ENCODE measurements at regions of chr5 and their contacts with region 1.

Region 1: GRCh38 chr5:38441453-38442246 is 114.8 kb downstream of the LIFR start:
- DNase-seq: peak; percentile 90
- ATAC-seq: peak; percentile 99
- H3K4me3 Mint-ChIP-seq: no peak overlapping the region
- H3K27ac Mint-ChIP-seq: no peak overlapping the region
- H3K4me1 Mint-ChIP-seq: no peaks in the 10 kb centered on the region
- H3K27me3 Mint-ChIP-seq: peaks cover 25% of the 10 kb centered on the region

Region 2: DNA sequence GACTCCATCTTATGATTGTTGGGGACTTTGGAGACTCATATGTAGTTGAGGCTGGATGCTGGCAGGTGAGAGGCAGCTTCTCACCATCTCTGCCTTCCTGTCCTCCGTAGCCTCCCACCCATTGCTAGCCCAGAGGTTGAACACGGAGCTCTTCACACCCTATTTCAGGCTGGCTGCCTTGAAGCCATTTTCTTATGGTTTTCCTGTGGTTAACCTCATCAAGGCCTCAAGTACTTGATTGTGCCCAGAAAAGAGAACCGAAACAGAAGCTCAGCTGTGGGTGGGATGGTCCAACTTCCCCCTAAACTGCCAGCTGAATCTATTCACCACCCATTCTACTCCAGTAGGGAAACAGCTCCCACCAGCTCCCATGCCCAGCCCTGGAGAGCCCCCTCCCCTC is 11.9 kb after region 1 on chr5:
- CTCF ChIA-PET with region 1: interaction called, 45 read pairs
- POLR2A ChIA-PET with region 1: no interaction called
- intact Hi-C with region 1: no loop called
- DNase-seq: peak; percentile 50
- ATAC-seq: peak; percentile 94
- H3K4me3 Mint-ChIP-seq: no peak overlapping the region
- H3K27ac Mint-ChIP-seq: no peak overlapping the region
- H3K4me1 Mint-ChIP-seq: peaks cover 25% of the 10 kb centered on the region
- H3K27me3 Mint-ChIP-seq: peaks cover 78% of the 10 kb centered on the region

Region 3: GRCh38 chr5:38556599-38557305 is 115.1 kb after region 1 on chr5 and contains the start of gene LIFR:
- CTCF ChIA-PET with region 1: interaction called, 7 read pairs
- POLR2A ChIA-PET with region 1: interaction called, 3 read pairs
- intact Hi-C with region 1: loop called (anchors 1 kb)
- DNase-seq: peak; percentile 77
- ATAC-seq: peak; percentile 70
- H3K4me3 Mint-ChIP-seq: peak within 1 kb of the TSS; percentile 72
- H3K27ac Mint-ChIP-seq: no peak within 1 kb of the TSS
- H3K4me1 Mint-ChIP-seq: peaks cover 10% of the 10 kb centered on the region
- H3K27me3 Mint-ChIP-seq: peaks cover 52% of the 10 kb centered on the region
- total RNA-seq, gene LIFR: 0.09 to 0.14 TPM

Region 4: GRCh38 chr5:38591523-38591849 is 149.8 kb after region 1 on chr5:
- CTCF ChIA-PET with region 1: no interaction called
- POLR2A ChIA-PET with region 1: no interaction called
- intact Hi-C with region 1: no loop called
- DNase-seq: no peak
- ATAC-seq: no peak
- H3K4me3 Mint-ChIP-seq: no peak overlapping the region
- H3K27ac Mint-ChIP-seq: no peak overlapping the region
- H3K4me1 Mint-ChIP-seq: no peaks in the 10 kb centered on the region
- H3K27me3 Mint-ChIP-seq: peaks cover 10% of the 10 kb centered on the region

Region 5: DNA sequence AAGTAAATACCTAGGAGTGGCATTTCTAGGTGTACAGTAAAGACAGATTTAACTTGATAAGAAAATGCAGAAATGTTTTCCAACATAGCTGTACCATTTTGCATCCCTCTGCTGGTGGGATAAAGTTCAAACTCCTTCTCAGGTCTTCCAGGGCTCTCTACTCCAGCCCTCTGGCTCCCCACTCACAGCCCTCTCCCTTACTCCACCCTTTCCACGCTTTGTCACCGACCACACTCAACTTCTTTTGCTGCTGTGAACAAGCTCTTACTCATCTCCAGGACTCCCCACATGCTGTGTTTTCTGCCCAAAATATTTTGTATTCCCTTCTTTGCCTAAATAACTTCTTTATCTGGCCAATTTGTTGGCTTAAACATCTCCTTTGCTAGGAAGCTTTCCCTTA is 313.5 kb after region 1 on chr5:
- CTCF ChIA-PET with region 1: interaction called, 10 read pairs
- POLR2A ChIA-PET with region 1: no interaction called
- intact Hi-C with region 1: no loop called
- DNase-seq: no peak
- ATAC-seq: no peak
- H3K4me3 Mint-ChIP-seq: no peak overlapping the region
- H3K27ac Mint-ChIP-seq: no peak overlapping the region
- H3K4me1 Mint-ChIP-seq: no peaks in the 10 kb centered on the region
- H3K27me3 Mint-ChIP-seq: peaks cover 14% of the 10 kb centered on the region

Region 6: DNA sequence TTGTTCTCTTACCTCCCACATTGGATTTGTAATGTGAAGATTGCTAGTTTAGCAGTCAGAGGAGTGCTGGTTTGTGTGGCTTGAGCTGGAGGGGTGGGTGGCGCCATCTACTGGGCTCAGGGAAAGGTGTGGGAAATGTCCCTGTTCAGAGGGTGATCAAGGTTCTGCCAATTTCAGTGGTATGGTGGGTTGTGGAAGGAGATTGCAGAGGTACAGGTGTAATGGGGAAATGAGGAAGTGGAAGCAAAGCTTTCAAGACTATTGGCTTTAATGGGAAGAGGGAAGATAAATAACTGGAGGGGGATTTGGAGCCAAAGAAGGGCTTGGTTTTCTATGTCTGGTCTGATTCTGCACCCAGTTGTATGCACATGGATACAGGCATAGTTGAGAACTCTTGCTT is 480.5 kb after region 1 on chr5:
- CTCF ChIA-PET with region 1: interaction called, 27 read pairs
- POLR2A ChIA-PET with region 1: no interaction called
- intact Hi-C with region 1: loop called (anchors 1 to 5 kb)
- DNase-seq: peak; percentile 75
- ATAC-seq: peak; percentile 72
- H3K4me3 Mint-ChIP-seq: no peak overlapping the region
- H3K27ac Mint-ChIP-seq: no peak overlapping the region
- H3K4me1 Mint-ChIP-seq: no peaks in the 10 kb centered on the region
- H3K27me3 Mint-ChIP-seq: peaks cover 14% of the 10 kb centered on the region

Region 7: DNA sequence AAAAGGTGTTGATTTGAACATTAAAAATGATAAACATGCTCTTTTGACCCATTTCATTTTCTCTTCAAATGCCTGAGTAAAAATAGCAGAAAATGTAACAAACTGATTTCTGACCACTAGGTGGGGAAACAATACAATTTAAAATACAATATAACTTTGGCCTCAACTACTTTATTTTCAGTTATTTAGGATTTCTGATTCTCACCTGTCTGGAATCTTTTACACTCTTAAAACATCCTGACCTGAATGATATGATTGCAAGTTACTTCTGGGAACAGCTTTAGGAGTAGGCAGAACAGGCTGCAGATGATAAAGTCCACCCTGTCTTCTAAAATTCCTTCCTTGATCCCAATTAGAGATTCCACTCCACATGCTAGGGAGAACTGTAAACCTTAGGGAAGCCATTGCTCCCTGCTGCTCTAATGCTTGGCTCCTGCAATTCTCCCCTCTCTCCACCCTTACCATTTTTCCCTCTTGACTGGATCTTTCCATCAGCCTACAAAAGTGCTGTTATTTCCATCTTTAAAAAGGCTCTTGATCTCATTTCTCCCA is 707.4 kb after region 1 on chr5:
- CTCF ChIA-PET with region 1: no interaction called
- POLR2A ChIA-PET with region 1: no interaction called
- intact Hi-C with region 1: no loop called
- DNase-seq: no peak
- ATAC-seq: no peak
- H3K4me3 Mint-ChIP-seq: no peak overlapping the region
- H3K27ac Mint-ChIP-seq: peak overlapping the region; percentile 85
- H3K4me1 Mint-ChIP-seq: peaks cover 75% of the 10 kb centered on the region
- H3K27me3 Mint-ChIP-seq: no peaks in the 10 kb centered on the region